Esophagus muscularis mucosa (tissue), 4 donors: ENCODE measurements at regions of chr4 and their contacts with region 1.

Region 1: DNA sequence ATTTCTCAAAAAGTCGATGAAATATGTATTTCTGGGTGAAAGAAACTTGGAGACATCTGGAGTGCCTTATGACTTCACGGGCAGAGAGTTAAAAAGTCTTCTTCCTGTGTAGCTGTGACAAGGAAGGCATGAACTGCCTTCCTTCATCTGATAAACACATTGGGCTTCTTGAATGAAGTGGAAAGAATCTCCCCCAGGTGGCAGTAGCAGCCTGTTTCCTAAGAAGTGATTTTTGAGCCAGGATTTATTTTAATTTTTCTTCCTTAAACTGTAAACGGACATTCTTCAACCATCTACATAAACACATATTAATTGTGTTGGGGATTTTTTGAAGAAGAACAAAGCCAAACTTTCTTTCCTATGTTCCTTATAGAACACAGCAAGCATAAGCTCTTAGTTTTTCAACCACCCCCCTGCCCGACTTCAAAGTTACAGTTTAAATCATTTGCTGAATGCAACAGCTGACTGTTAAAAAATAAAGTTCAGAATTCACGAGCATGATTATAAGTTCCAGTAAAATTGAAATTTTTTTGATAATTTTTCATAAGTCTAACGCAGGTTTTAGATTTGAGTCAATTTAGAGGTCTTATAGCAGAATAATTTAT is 980 bp upstream of the GIMD1 start:
- DNase-seq: no peak
- H3K4me3 ChIP-seq: no peak overlapping the region
- H3K27ac ChIP-seq: no peak overlapping the region
- H3K4me1 ChIP-seq: peaks cover 0 to 12% (median 6%) of the 10 kb centered on the region in 4 donors
- H3K27me3 ChIP-seq: peaks cover 0 to 4% (median 0%) of the 10 kb centered on the region in 4 donors
- CTCF ChIP-seq: peak; percentile 37 to 58 (median 48)
- EP300 ChIP-seq: no peak
- POLR2A ChIP-seq: no peak

Region 2: DNA sequence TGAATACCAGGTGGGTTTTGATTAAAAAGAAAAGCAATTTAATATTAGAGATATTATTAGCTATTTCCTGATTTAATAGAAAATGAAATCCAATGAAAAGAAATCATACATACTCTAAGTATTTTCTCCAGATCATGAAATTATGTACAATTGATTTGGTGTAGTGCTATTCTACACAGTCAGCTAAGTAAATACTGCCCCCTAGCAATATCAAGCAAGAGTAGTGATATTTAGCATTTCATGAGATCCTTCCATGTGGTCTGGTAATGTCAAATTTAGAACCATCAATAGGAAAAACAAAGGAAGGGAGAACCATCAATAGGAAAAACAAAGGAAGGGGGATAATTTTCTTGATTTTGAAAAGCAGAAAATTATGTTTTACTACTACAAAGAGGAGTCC is 168.2 kb before region 1 on chr4:
- intact Hi-C with region 1: no loop called
- DNase-seq: no peak
- H3K4me3 ChIP-seq: no peak overlapping the region
- H3K27ac ChIP-seq: no peak overlapping the region
- H3K4me1 ChIP-seq: no peaks in the 10 kb centered on the region
- H3K27me3 ChIP-seq: no peaks in the 10 kb centered on the region
- CTCF ChIP-seq: peak; percentile 37 to 50 (median 41)
- EP300 ChIP-seq: no peak
- POLR2A ChIP-seq: no peak

Region 3: GRCh38 chr4:106463622-106464021 is 94.1 kb after region 1 on chr4:
- intact Hi-C with region 1: no loop called
- DNase-seq: no peak
- H3K4me3 ChIP-seq: no peak overlapping the region
- H3K27ac ChIP-seq: no peak overlapping the region
- H3K4me1 ChIP-seq: no peaks in the 10 kb centered on the region
- H3K27me3 ChIP-seq: no peaks in the 10 kb centered on the region
- CTCF ChIP-seq: no peak
- EP300 ChIP-seq: no peak
- POLR2A ChIP-seq: no peak

Region 4: DNA sequence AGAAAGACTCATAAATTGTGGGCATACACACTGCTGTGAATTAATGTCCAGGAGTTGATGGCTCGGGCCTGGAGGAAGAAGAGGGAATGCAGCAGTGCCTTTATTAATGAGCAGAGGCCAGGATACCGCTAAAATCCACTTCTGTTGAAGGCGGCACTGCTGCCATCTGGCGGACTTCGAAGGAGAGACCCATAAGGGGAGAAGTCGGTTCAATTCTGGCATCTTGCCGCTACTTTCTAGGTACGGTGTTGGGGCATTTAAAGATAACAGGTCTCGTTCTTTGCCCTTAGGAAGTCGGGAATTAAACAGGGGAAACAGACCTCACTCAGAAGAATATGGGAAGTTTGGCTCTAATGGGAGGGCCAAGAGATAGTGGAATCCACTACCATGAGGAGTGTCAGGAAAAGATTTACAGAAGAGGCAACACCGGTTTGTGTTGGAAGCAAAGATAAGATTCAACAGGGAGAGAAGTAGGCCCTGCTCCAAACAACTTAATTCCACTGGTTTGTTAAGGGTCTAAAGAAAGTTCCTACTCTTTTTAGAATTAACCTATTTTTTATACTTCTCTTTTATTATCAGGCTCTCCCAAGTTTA is 132.6 kb after region 1 on chr4:
- intact Hi-C with region 1: loop called (anchors 5 kb)
- DNase-seq: no peak
- H3K4me3 ChIP-seq: no peak overlapping the region
- H3K27ac ChIP-seq: no peak overlapping the region
- H3K4me1 ChIP-seq: no peaks in the 10 kb centered on the region
- H3K27me3 ChIP-seq: no peaks in the 10 kb centered on the region
- CTCF ChIP-seq: peak in 2 of 3 experiments; percentile 18 to 51
- EP300 ChIP-seq: no peak
- POLR2A ChIP-seq: no peak

Region 5: DNA sequence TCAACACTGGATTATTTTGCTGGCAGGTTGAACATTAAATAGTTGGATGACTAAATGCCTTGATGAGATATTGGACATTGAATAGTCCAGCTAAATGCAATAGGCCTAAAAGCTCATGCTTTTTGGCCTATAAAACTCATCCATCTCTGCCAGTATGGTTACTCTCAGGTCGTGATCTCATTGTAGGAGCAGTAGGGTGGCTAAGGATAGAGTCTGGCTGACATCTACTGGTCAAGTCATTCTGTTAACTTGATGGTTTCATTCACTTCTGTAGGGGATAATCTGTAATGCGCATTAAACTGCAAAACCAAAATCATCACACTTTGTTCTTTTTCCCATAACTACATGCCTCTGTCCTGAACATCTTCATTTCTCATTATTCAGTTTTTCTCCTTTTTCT is 439.5 kb after region 1 on chr4:
- intact Hi-C with region 1: loop called (anchors 10 kb)
- DNase-seq: no peak
- H3K4me3 ChIP-seq: no peak overlapping the region
- H3K27ac ChIP-seq: no peak overlapping the region
- H3K4me1 ChIP-seq: no peaks in the 10 kb centered on the region
- H3K27me3 ChIP-seq: no peaks in the 10 kb centered on the region
- CTCF ChIP-seq: peak in 2 of 3 experiments; percentile 27 to 35
- EP300 ChIP-seq: no peak
- POLR2A ChIP-seq: no peak

Region 6: GRCh38 chr4:107183155-107183774 is 813.7 kb after region 1 on chr4:
- intact Hi-C with region 1: loop called (anchors 5 kb)
- DNase-seq: no peak
- H3K4me3 ChIP-seq: no peak overlapping the region
- H3K27ac ChIP-seq: no peak overlapping the region
- H3K4me1 ChIP-seq: no peaks in the 10 kb centered on the region
- H3K27me3 ChIP-seq: no peaks in the 10 kb centered on the region
- CTCF ChIP-seq: peak; percentile 62 to 78 (median 65)
- EP300 ChIP-seq: no peak
- POLR2A ChIP-seq: no peak